ENCODE measurements at regions of chr5 and their contacts with region 1.

Region 1: DNA sequence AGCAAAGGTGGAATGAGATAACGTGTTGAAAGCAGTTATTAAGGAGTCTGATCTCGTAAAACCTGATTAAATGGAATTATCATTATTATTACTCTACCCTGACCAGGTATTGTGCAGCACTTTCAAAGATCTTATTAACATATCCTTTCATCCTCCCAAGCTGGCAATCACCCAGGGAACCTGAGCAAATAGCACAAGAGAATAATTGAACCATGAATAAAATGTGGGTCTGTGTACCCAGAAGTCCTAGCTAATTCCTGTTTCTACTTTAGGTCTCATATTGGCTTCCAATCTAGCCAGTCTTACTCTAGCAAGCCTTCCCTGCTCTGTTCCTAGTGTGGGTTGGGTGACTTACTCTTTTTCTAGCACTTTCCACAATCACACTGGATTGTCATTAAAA is 162.2 kb upstream of the STK32A start:
- DNase-seq: no peak
- ATAC-seq: no peak; the same call in 1 of the 2 replicates
- H3K4me3 Mint-ChIP-seq: no peak overlapping the region
- H3K27ac Mint-ChIP-seq: peak overlapping the region; percentile 86
- H3K4me1 Mint-ChIP-seq: peaks cover 27% of the 10 kb centered on the region
- H3K27me3 Mint-ChIP-seq: no peaks in the 10 kb centered on the region
- CTCF ChIP-seq: no peak

Region 2: GRCh38 chr5:147098233-147098790 is 25.7 kb after region 1 on chr5:
- CTCF ChIA-PET with region 1: interaction called, 17 read pairs
- POLR2A ChIA-PET with region 1: no interaction called
- DNase-seq: peak; percentile 49
- ATAC-seq: peak; percentile 70
- H3K4me3 Mint-ChIP-seq: no peak overlapping the region
- H3K27ac Mint-ChIP-seq: peak overlapping the region; percentile 68; the same call in 1 of the 2 replicates
- H3K4me1 Mint-ChIP-seq: peaks cover 20% of the 10 kb centered on the region
- H3K27me3 Mint-ChIP-seq: no peaks in the 10 kb centered on the region
- CTCF ChIP-seq: peak; percentile 79

Measured in WTC11 (cell line).